ENCODE measurements at regions of chr13 and their contacts with region 1.

Region 1: GRCh38 chr13:45119991-45120864 is at the start of gene GTF2F2:
- DNase-seq: peak; percentile 90 to 95 (median 92)
- ATAC-seq: peak; percentile 94 to 97 (median 95)
- H3K4me3 ChIP-seq: peak within 1 kb of the TSS; percentile 59 to 97 (median 80)
- H3K27ac ChIP-seq: peak within 1 kb of the TSS; percentile 2 to 90 (median 82)
- H3K4me1 ChIP-seq: peaks cover 3 to 26% (median 16%) of the 10 kb centered on the region in 12 donors
- H3K27me3 ChIP-seq: no peaks in the 10 kb centered on the region
- CTCF ChIP-seq: peak in 1 of 12 donors; percentile 14
- POLR2A ChIP-seq: peak in 1 of 2 donors; percentile 50
- total RNA-seq, gene GTF2F2: 17.7 to 25.4 (median 21.6) TPM

Region 2: GRCh38 chr13:44470638-44471562 is 649.3 kb before region 1 on chr13:
- intact Hi-C with region 1: loop called in 1 of 10 experiments (anchors 5 kb)
- DNase-seq: no peak
- ATAC-seq: no peak
- H3K4me3 ChIP-seq: no peak overlapping the region
- H3K27ac ChIP-seq: no peak overlapping the region
- H3K4me1 ChIP-seq: peaks cover 0 to 15% (median 8%) of the 10 kb centered on the region in 12 donors
- H3K27me3 ChIP-seq: no peaks in the 10 kb centered on the region
- CTCF ChIP-seq: peak; percentile 38 to 66 (median 57)
- POLR2A ChIP-seq: no peak

Region 3: DNA sequence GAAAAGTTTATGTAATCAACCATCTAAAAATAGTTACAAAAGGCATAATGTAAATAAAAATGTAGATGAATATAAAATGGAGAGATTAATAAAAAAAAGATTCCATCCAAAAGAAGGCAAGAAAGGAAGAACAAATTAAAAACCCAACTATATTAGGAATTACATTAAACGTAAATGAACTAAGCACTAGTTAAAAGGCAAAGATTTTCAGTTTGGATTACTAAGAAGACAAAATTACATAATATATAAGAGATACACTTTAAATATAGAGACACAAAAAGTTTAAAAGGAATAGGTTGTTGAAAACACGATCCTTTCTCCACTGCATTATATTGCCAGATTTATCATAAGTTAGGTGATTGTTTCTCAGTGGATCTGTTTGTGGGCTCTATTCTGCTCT is 158.2 kb before region 1 on chr13:
- intact Hi-C with region 1: no loop called
- DNase-seq: no peak
- ATAC-seq: no peak
- H3K4me3 ChIP-seq: no peak overlapping the region
- H3K27ac ChIP-seq: no peak overlapping the region
- H3K4me1 ChIP-seq: no peaks in the 10 kb centered on the region
- H3K27me3 ChIP-seq: no peaks in the 10 kb centered on the region
- CTCF ChIP-seq: no peak
- POLR2A ChIP-seq: no peak

Region 4: DNA sequence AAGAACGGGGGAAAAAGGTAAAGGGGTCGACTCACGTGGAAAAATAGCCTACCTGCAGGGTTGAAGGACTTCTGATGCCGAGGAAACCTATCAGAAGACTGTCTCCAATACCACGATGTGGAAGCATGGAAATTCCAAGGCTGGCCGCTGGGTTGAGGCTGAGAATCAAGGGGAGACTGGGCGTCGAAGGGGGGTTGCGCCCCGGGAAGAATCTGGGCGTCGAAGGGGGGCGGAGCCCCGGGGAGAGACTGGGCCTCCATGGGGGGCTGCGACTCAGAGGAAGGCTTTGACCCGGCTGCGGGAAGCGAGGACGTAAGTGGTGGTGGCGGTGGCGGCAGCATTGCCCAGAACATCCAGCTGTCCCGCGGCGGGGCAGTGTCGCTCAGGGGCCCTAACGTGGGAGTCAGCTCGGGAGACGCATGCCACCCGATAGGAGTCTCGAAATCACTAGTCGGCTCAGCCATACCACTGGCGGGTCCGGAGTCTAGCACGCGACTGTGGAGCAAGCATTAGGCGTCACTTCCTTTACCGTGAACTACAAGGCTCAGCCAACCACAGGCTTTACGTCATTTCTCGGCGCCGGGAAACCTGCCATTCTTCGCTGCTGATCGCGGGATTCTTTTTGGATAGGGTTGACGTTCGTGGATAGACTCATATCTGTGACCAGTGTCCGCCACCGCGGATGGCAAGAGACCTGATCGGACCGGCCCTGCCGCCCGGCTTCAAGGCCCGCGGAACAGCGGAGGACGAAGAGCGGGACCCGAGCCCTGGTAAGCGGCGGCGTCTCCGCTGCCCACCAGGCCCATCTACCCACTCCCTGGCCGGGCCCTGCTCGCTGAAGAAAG is 131.0 kb before region 1 on chr13 and contains the starts of genes GPALPP1 and NUFIP1:
- intact Hi-C with region 1: loop called in 1 of 10 experiments (anchors 5 kb)
- DNase-seq: peak; percentile 92 to 94 (median 93)
- ATAC-seq: peak; percentile 95 to 99 (median 98)
- H3K4me3 ChIP-seq: peak within 1 kb of the TSS; percentile 68 to 100 (median 92)
- H3K27ac ChIP-seq: peak within 1 kb of the TSS in 11 of 12 donors; percentile 34 to 90 (median 87)
- H3K4me1 ChIP-seq: peaks cover 3 to 34% (median 23%) of the 10 kb centered on the region in 12 donors
- H3K27me3 ChIP-seq: no peaks in the 10 kb centered on the region
- CTCF ChIP-seq: peak in 1 of 12 donors; percentile 20
- POLR2A ChIP-seq: peak in 1 of 2 donors; percentile 56
- total RNA-seq, gene GPALPP1: 10.9 to 16.1 (median 13.4) TPM
- total RNA-seq, gene NUFIP1: 2.1 to 4.9 (median 3.3) TPM

Region 5: DNA sequence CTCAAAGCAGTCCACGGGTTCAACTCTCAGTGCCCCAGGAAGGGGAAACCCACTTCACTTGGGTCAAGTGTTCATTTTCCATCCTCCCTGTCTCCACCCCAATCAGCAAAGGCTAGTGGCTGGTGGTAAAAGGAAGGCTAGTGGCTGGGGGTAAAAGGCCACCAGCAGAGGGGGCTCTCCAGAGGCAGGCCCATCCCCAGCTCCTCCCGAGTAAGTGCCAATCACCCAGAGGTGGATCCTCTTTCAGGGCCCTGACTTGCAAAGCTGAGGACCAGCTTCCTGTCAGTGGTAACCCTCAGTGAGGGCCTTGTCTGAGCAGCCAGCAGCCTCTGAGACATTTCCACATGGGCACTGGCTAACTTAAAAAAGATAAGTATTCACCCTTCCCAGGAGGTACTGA is 242.7 kb after region 1 on chr13:
- intact Hi-C with region 1: no loop called
- DNase-seq: no peak
- ATAC-seq: no peak
- H3K4me3 ChIP-seq: no peak overlapping the region
- H3K27ac ChIP-seq: no peak overlapping the region
- H3K4me1 ChIP-seq: peaks cover 0 to 17% (median 0%) of the 10 kb centered on the region in 12 donors
- H3K27me3 ChIP-seq: no peaks in the 10 kb centered on the region
- CTCF ChIP-seq: no peak
- POLR2A ChIP-seq: no peak

Measured in heart left ventricle (tissue), 16 donors.